ENCODE measurements at regions of chr2 and their contacts with region 1.

Region 1: DNA sequence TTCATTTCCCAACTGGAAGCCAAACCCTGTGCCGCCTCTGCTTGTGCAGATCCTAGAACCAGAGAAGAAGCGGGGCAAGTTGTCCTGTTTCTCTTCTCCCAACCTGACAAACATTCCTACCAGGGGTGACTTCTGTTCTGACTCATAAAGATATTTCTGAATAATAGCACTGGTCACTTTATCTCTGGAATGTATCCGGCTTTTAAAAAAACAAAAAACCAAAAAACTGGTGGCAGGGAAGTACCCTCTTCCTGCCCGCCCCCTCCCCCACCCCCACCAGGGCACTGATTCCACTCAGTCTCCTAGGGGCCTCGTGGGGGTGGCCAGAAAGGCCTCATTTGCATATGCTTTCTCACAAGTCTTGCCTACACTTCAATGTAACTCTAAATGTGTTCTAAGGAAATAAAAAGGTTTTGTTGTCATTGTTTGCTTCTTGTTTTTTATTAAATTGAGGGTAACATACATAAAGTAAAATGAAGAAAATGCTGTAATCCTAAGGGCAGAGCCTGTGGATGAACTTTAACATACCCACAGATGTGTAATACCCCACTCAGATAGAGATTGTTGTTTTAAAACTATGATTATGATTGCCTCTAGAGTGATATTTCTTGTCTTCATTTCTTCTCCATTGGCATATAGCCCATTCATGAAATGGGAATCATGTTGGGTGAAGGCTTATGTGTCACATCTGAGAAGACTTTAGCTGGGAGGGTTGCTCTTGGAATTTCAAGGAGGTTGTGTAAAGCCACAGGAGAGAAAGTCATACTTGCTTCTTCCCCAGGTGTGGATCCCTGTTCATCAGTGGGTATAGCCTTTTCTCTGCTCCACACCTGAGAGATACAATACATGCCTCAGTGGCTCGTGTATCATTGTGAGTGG is 5.3 kb upstream of the FOSL2 start:
- DNase-seq: no peak
- H3K4me3 ChIP-seq: no peak overlapping the region
- H3K27ac ChIP-seq: peak overlapping the region in 2 of 4 donors; percentile 22 to 100
- H3K4me1 ChIP-seq: peaks cover 0 to 25% (median 12%) of the 10 kb centered on the region in 4 donors
- H3K27me3 ChIP-seq: no peaks in the 10 kb centered on the region
- CTCF ChIP-seq: no peak
- EP300 ChIP-seq: no peak
- POLR2A ChIP-seq: no peak

Region 2: GRCh38 chr2:28356095-28356911 is 31.0 kb before region 1 on chr2:
- intact Hi-C with region 1: loop called (anchors 2 kb)
- DNase-seq: peak; percentile 97
- H3K4me3 ChIP-seq: no peak overlapping the region
- H3K27ac ChIP-seq: peak overlapping the region; percentile 77 to 86 (median 80)
- H3K4me1 ChIP-seq: peaks cover 0 to 39% (median 30%) of the 10 kb centered on the region in 4 donors
- H3K27me3 ChIP-seq: no peaks in the 10 kb centered on the region
- CTCF ChIP-seq: no peak
- EP300 ChIP-seq: peak in 1 of 4 donors; percentile 35
- POLR2A ChIP-seq: no peak

Region 3: DNA sequence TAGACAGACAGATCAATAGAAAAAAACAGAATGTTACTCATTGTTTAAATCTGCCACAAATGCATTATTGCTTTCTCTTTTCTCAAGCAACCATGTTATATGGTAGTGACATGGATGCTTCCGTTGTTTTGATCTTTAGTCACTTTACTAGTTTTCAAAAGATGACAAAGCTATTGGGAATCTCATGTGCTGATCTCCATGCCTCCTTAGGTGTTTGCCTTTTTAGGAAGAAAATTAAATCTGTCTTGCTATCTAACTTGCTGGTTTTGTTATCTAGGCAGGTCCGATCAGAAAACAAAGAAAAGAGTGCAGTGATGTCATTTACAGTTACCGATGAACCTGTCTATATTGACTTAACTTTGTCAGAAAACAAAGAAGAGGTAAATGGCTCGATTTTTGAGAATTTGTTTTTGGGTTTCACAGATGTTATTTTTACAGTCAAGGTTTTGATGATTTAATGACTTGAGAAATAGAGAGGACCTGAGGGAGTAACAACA is 530.3 kb after region 1 on chr2:
- intact Hi-C with region 1: no loop called
- DNase-seq: no peak
- H3K4me3 ChIP-seq: no peak overlapping the region
- H3K27ac ChIP-seq: no peak overlapping the region
- H3K4me1 ChIP-seq: no peaks in the 10 kb centered on the region
- H3K27me3 ChIP-seq: no peaks in the 10 kb centered on the region
- CTCF ChIP-seq: no peak
- EP300 ChIP-seq: no peak
- POLR2A ChIP-seq: no peak